Ascending aorta (tissue), 2 donors: ENCODE measurements at regions of chr6 and their contacts with region 1.

Region 1: GRCh38 chr6:12296255-12296573 is 6.1 kb downstream of the EDN1 start:
- DNase-seq: peak in 1 of 2 donors; percentile 85
- H3K4me3 ChIP-seq: peak overlapping the region; percentile 11 to 40
- H3K27ac ChIP-seq: peak overlapping the region; percentile 81 to 85
- H3K4me1 ChIP-seq: peaks cover 8 to 36% of the 10 kb centered on the region in 2 donors
- H3K27me3 ChIP-seq: no peaks in the 10 kb centered on the region
- CTCF ChIP-seq: no peak

Region 2: DNA sequence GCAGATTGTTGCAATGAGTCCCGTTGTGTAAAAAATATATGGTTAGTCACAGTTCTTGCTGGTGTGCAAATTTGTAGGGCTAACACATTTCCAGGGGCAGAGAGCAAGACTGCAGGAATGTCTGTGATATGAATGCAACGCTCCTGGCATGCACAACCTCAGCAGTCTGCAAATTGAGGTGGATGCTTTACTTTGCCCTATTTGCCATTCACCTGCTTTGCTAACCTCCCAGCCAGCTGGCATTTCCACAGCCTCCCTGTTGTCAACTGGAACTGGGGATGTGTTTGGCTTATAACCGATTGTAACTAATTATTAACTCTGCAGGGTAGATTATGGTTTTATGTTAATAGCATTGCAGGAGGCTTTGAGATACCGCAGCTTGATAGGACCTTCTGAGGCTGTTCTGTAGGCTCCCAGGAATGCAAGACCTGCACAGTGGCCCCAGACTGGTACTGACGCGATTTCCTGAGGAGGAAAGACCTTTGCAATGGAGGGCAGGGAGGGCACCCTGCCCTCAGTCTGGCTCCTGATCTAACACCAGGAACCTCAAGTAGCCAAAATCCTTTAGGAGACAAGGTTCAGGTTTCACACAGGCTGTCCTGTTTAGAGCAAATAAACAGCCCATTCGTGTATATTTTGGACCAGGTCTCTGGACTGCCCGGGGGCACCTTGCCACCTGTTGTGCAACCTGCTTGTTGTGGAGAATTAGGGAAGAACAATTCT is 47.4 kb after region 1 on chr6:
- intact Hi-C with region 1: loop called (anchors 2 kb)
- DNase-seq: no peak
- H3K4me3 ChIP-seq: no peak overlapping the region
- H3K27ac ChIP-seq: peak overlapping the region; percentile 81 to 87
- H3K4me1 ChIP-seq: peaks cover 4 to 42% of the 10 kb centered on the region in 2 donors
- H3K27me3 ChIP-seq: no peaks in the 10 kb centered on the region
- CTCF ChIP-seq: no peak